Tibial artery (tissue), 4 donors: ENCODE measurements at regions of chr5 and their contacts with region 1.

Region 1: GRCh38 chr5:54229041-54229780 is 81.2 kb downstream of the ARL15 start:
- DNase-seq: peak; percentile 72 to 78
- H3K4me3 ChIP-seq: no peak overlapping the region
- H3K27ac ChIP-seq: no peak overlapping the region
- H3K4me1 ChIP-seq: peaks cover 0 to 6% (median 0%) of the 10 kb centered on the region in 4 donors
- H3K27me3 ChIP-seq: no peaks in the 10 kb centered on the region
- CTCF ChIP-seq: peak; percentile 77 to 86

Region 2: DNA sequence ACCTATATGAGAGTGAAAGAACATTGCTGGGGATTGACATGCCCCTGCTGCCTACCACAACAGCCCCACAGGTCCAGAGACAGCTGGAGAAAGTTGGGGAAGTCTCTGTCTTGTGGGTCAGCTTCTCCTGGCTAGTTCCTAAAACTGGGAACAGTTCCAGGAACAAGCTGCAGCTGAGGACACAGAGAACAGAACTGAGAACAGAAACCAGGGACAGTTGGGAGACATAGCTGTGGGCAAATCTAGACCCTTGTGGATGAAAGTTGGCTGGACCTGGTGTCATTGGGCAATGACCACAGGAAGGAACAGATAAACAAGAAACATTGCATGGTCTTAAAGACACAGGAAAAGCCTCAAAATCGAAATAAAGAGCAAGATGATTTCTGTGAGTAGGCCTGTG is 1061.4 kb before region 1 on chr5:
- intact Hi-C with region 1: loop called (anchors 10 kb)
- DNase-seq: peak; percentile 84 to 87
- H3K4me3 ChIP-seq: no peak overlapping the region
- H3K27ac ChIP-seq: peak overlapping the region; percentile 42 to 46
- H3K4me1 ChIP-seq: peaks cover 0 to 38% (median 21%) of the 10 kb centered on the region in 4 donors
- H3K27me3 ChIP-seq: no peaks in the 10 kb centered on the region
- CTCF ChIP-seq: no peak